ENCODE measurements at regions of chr10 and their contacts with region 1.

Region 1: DNA sequence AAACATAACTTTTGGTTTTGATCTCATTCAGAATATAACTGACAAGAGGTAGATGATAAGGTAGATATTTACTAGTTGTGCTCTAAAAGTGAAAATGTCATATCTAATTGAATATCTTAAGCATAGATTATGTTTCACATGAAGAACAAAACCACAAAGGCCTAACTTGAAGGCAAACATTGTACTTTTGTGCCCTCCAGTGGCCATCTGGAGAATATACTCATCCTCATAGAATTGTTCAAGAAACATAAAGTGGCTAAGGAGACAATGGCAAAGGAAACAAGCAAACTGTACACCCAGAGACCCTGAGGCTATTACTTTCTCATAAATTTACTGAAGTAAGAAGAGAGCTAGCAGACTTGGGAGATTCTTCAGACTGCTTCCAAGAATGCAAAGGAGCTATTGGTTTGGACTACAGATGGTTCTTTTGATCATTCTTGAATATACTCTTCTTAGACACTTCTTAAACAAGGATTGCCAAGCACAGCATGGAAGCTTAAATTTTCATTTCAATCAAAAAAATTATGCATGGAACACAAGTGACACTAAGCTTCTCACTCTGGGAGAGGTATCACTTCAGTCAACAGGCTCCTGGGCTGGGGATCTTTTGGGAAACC is 98.2 kb upstream of the DKK1 start:
- ATAC-seq: peak; percentile 52 to 90 (median 56)
- H3K4me3 ChIP-seq: no peak overlapping the region
- H3K27ac ChIP-seq: no peak overlapping the region
- H3K4me1 ChIP-seq: peaks cover 0 to 6% of the 10 kb centered on the region in 2 donors

Region 2: GRCh38 chr10:51010977-51011376 is 1204.9 kb before region 1 on chr10:
- in situ Hi-C with region 1: loop called in 3 of 9 experiments (anchors 25 kb)
- ATAC-seq: peak in 3 of 8 experiments; percentile 24 to 61 (median 45)
- H3K4me3 ChIP-seq: no peak overlapping the region
- H3K27ac ChIP-seq: no peak overlapping the region
- H3K4me1 ChIP-seq: no peaks in the 10 kb centered on the region

Region 3: GRCh38 chr10:51047857-51048256 is 1168.0 kb before region 1 on chr10:
- in situ Hi-C with region 1: loop called in 2 of 9 experiments (anchors 25 kb)
- ATAC-seq: peak in 2 of 8 experiments; percentile 50 to 63
- H3K4me3 ChIP-seq: no peak overlapping the region
- H3K27ac ChIP-seq: no peak overlapping the region
- H3K4me1 ChIP-seq: no peaks in the 10 kb centered on the region

Region 4: GRCh38 chr10:51063659-51064535 is 1152.0 kb before region 1 on chr10:
- in situ Hi-C with region 1: loop called in 2 of 9 experiments (anchors 10 to 25 kb)
- ATAC-seq: peak; percentile 32 to 71 (median 54)
- H3K4me3 ChIP-seq: no peak overlapping the region
- H3K27ac ChIP-seq: no peak overlapping the region
- H3K4me1 ChIP-seq: no peaks in the 10 kb centered on the region

Region 5: GRCh38 chr10:51074238-51075028 is 1141.4 kb before region 1 on chr10 and contains the start of gene PRKG1:
- in situ Hi-C with region 1: loop called in 2 of 9 experiments (anchors 10 to 25 kb)
- ATAC-seq: peak; percentile 81 to 95 (median 90)
- H3K4me3 ChIP-seq: peak within 1 kb of the TSS; percentile 49 to 84 (median 57)
- H3K27ac ChIP-seq: peak within 1 kb of the TSS in 1 of 2 donors; percentile 54
- H3K4me1 ChIP-seq: peaks cover 8 to 14% of the 10 kb centered on the region in 2 donors
- total RNA-seq, gene PRKG1: 5.6 to 40.7 (median 6.6) TPM

Region 6: DNA sequence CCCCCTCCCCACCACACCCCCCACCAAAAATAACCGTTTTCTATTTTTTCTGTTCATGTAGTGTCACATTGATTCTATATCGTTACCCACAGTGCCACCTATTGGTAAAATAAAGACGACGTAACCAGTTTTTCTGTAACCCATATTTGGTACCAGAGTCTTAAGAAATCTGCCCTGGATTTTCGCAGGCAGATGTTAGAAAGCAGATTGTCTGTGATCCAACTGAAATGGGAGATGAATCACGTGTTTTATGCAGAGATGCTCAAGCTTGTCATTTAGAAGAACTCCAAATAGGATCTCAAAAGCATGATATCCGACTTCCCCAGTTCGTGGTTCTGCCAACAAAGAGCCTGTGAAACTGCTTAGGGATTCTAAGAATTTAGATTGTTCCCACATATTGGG is 255.4 kb before region 1 on chr10:
- in situ Hi-C with region 1: loop called in 2 of 9 experiments (anchors 25 kb)
- ATAC-seq: peak; percentile 33 to 81 (median 52)
- H3K4me3 ChIP-seq: no peak overlapping the region
- H3K27ac ChIP-seq: no peak overlapping the region
- H3K4me1 ChIP-seq: no peaks in the 10 kb centered on the region

Region 7: GRCh38 chr10:52420656-52421055 is 204.8 kb after region 1 on chr10:
- in situ Hi-C with region 1: no loop called
- ATAC-seq: no peak
- H3K4me3 ChIP-seq: no peak overlapping the region
- H3K27ac ChIP-seq: no peak overlapping the region
- H3K4me1 ChIP-seq: no peaks in the 10 kb centered on the region

Measured in motor neuron (in vitro differentiated cells).